Colonic mucosa (tissue), 4 donors: ENCODE measurements at regions of chr20 and their contacts with region 1.

Region 1: GRCh38 chr20:59782986-59783640 is 150.3 kb downstream of the SYCP2 start:
- DNase-seq: peak; percentile 36
- H3K4me3 ChIP-seq: no peak overlapping the region
- H3K27ac ChIP-seq: no peak overlapping the region
- H3K4me1 ChIP-seq: no peaks in the 10 kb centered on the region
- H3K27me3 ChIP-seq: no peaks in the 10 kb centered on the region
- CTCF ChIP-seq: peak; percentile 66

Region 2: GRCh38 chr20:59850018-59850641 is 67.0 kb after region 1 on chr20:
- intact Hi-C with region 1: loop called (anchors 2 kb)
- DNase-seq: no peak
- H3K4me3 ChIP-seq: no peak overlapping the region
- H3K27ac ChIP-seq: no peak overlapping the region
- H3K4me1 ChIP-seq: no peaks in the 10 kb centered on the region
- H3K27me3 ChIP-seq: no peaks in the 10 kb centered on the region
- CTCF ChIP-seq: peak; percentile 72